Dorsolateral prefrontal cortex (tissue), 120 donors: ENCODE measurements at regions of chr15 and their contacts with region 1.

Region 1: DNA sequence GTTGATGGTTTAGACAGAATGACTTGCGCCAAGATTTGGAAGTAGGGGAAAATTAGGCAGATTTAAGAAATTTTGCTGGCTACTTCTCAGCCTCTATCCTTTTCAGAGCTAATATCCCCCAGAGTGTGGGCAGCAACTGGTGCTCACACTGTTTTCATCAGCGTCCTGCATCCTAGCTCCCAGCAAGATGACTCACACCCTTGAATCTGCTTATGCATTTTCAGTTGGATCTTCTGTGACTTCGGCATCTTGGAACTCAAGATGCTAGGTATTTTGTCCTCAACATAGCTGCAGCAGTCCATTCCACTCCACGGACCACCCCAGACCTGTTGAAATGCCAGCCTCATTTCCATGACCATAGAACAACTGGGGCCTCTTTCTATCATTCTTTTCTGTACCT is 336.1 kb upstream of the NR2F2 start:
- DNase-seq: peak in 3 of 10 donors; percentile 8 to 35 (median 19)
- H3K4me3 ChIP-seq: no peak overlapping the region
- H3K27ac ChIP-seq: no peak overlapping the region
- H3K27me3 ChIP-seq: peaks cover 0 to 16% (median 0%) of the 10 kb centered on the region in 45 donors
- CTCF ChIP-seq: no peak

Region 2: GRCh38 chr15:95169541-95170459 is 824.6 kb before region 1 on chr15:
- intact Hi-C with region 1: loop called in 1 of 2 experiments (anchors 10 kb)
- DNase-seq: peak in 7 of 10 donors; percentile 37 to 68 (median 47)
- H3K4me3 ChIP-seq: peak overlapping the region in 42 of 59 donors; percentile 1 to 59 (median 22)
- H3K27ac ChIP-seq: peak overlapping the region in 45 of 59 donors; percentile 5 to 86 (median 46)
- H3K27me3 ChIP-seq: peaks cover 0 to 13% (median 0%) of the 10 kb centered on the region in 45 donors
- CTCF ChIP-seq: no peak